ENCODE measurements at regions of chr9 and their contacts with region 1.

Region 1: GRCh38 chr9:105901514-105902109 is 207.3 kb downstream of the TMEM38B start:
- DNase-seq: peak; percentile 52

Region 2: DNA sequence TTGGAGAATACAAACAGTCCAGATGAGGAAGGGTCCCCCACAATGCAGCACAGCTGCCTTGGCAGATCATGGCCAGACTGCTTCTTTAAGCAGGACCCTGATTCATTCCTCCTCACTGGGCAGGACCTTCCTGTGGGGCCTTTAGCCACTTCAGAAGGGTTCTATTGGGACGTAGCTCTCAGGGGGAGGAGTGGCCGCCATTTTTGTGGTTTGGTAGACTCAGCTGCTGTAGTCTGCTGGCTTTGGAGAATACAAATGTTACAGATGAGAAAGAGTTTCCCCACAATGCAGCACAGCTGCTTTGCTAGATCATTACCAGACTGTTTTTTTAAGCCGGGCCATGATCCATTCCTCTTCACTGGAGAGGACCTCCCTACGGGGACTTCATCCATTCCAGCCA is 149.9 kb before region 1 on chr9:
- in situ Hi-C with region 1: no loop called
- DNase-seq: no peak

Region 3: GRCh38 chr9:106019039-106019656 is 117.5 kb after region 1 on chr9:
- in situ Hi-C with region 1: loop called (anchors 25 kb)
- DNase-seq: no peak

Measured in KBM-7 (cell line).